H1 (cell line): ENCODE measurements at regions of chr10 and their contacts with region 1.

Region 1: GRCh38 chr10:111076191-111076681 is 593 bp upstream of the ADRA2A start:
- DNase-seq: peak; percentile 63 to 96
- H3K4me3 ChIP-seq: peak overlapping the region; percentile 44 to 75 (median 70)
- H3K27ac ChIP-seq: no peak overlapping the region
- H3K4me1 ChIP-seq: peaks cover 0 to 7% (median 2%) of the 10 kb centered on the region in 4 experiments; a peak in 4 of 7 replicates
- H3K27me3 ChIP-seq: peaks cover 12 to 27% (median 24%) of the 10 kb centered on the region in 4 experiments
- CTCF ChIP-seq: peak; percentile 91 to 98 (median 98)
- EP300 ChIP-seq: no peak; a peak in 1 of 3 replicates
- POLR2A ChIP-seq: no peak
- RAD21 ChIP-seq: peak; percentile 98 to 99

Region 2: GRCh38 chr10:111128331-111129180 is 52.3 kb after region 1 on chr10:
- CTCF ChIA-PET with region 1: interaction called, 15 read pairs
- POLR2A ChIA-PET with region 1: interaction called, 3 read pairs
- DNase-seq: no peak
- H3K4me3 ChIP-seq: no peak overlapping the region
- H3K27ac ChIP-seq: no peak overlapping the region
- H3K4me1 ChIP-seq: peaks cover 2 to 14% (median 8%) of the 10 kb centered on the region in 4 experiments; a peak in 6 of 7 replicates
- H3K27me3 ChIP-seq: no peaks in the 10 kb centered on the region
- CTCF ChIP-seq: no peak
- EP300 ChIP-seq: no peak
- POLR2A ChIP-seq: no peak
- RAD21 ChIP-seq: no peak

Region 3: GRCh38 chr10:111221682-111222480 is 145.6 kb after region 1 on chr10:
- CTCF ChIA-PET with region 1: interaction called, 11 read pairs
- POLR2A ChIA-PET with region 1: no interaction called
- DNase-seq: no peak
- H3K4me3 ChIP-seq: no peak overlapping the region
- H3K27ac ChIP-seq: no peak overlapping the region
- H3K4me1 ChIP-seq: no peaks in the 10 kb centered on the region
- H3K27me3 ChIP-seq: no peaks in the 10 kb centered on the region
- CTCF ChIP-seq: no peak
- EP300 ChIP-seq: no peak
- POLR2A ChIP-seq: no peak
- RAD21 ChIP-seq: no peak

Region 4: GRCh38 chr10:111289461-111289860 is 213.2 kb after region 1 on chr10:
- CTCF ChIA-PET with region 1: interaction called, 14 read pairs
- POLR2A ChIA-PET with region 1: no interaction called
- DNase-seq: no peak
- H3K4me3 ChIP-seq: no peak overlapping the region
- H3K27ac ChIP-seq: no peak overlapping the region
- H3K4me1 ChIP-seq: no peaks in the 10 kb centered on the region
- H3K27me3 ChIP-seq: peaks cover 0 to 1% (median 0%) of the 10 kb centered on the region in 4 experiments; a peak in 1 of 7 replicates
- CTCF ChIP-seq: no peak
- EP300 ChIP-seq: no peak
- POLR2A ChIP-seq: no peak
- RAD21 ChIP-seq: no peak

Region 5: GRCh38 chr10:111360260-111360925 is 284.2 kb after region 1 on chr10:
- CTCF ChIA-PET with region 1: interaction called, 20 read pairs
- POLR2A ChIA-PET with region 1: no interaction called
- DNase-seq: peak; percentile 49 to 55
- H3K4me3 ChIP-seq: no peak overlapping the region
- H3K27ac ChIP-seq: no peak overlapping the region
- H3K4me1 ChIP-seq: no peaks in the 10 kb centered on the region
- H3K27me3 ChIP-seq: peaks cover 0 to 1% (median 0%) of the 10 kb centered on the region in 4 experiments; a peak in 1 of 7 replicates
- CTCF ChIP-seq: peak; percentile 70 to 99 (median 94)
- EP300 ChIP-seq: no peak
- POLR2A ChIP-seq: no peak
- RAD21 ChIP-seq: peak; percentile 96 to 97